ENCODE measurements at regions of chr12 and their contacts with region 1.

Region 1: DNA sequence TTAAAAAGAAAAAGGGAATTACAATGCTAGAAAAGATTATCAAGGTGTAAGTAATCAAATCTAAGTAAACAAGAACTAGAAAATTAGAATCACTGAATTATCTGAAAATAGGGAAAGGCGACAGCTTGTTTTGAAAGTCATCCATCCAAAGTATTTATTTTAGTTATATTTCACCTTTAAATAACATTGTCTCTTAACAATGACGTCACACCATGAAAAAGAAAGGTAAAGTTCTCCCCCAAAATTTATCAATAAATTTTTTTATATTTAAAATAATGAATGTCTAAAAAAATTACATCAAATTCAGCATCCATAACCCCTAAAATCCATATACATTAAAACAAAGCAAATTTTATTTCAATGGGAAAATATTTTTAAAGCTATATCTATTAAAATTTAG is 223.2 kb downstream of the RERGL start:
- DNase-seq: no peak
- H3K4me3 ChIP-seq: no peak overlapping the region
- H3K27ac ChIP-seq: no peak overlapping the region
- H3K4me1 ChIP-seq: no peaks in the 10 kb centered on the region
- CTCF ChIP-seq: no peak

Region 2: GRCh38 chr12:17778242-17778641 is 88.6 kb before region 1 on chr12:
- CTCF ChIA-PET with region 1: no interaction called
- POLR2A ChIA-PET with region 1: no interaction called
- intact Hi-C with region 1: loop called (anchors 2 kb)
- DNase-seq: no peak
- H3K4me3 ChIP-seq: no peak overlapping the region
- H3K27ac ChIP-seq: no peak overlapping the region
- H3K4me1 ChIP-seq: no peaks in the 10 kb centered on the region
- CTCF ChIP-seq: no peak